ENCODE measurements at regions of chr9 and their contacts with region 1.

Region 1: DNA sequence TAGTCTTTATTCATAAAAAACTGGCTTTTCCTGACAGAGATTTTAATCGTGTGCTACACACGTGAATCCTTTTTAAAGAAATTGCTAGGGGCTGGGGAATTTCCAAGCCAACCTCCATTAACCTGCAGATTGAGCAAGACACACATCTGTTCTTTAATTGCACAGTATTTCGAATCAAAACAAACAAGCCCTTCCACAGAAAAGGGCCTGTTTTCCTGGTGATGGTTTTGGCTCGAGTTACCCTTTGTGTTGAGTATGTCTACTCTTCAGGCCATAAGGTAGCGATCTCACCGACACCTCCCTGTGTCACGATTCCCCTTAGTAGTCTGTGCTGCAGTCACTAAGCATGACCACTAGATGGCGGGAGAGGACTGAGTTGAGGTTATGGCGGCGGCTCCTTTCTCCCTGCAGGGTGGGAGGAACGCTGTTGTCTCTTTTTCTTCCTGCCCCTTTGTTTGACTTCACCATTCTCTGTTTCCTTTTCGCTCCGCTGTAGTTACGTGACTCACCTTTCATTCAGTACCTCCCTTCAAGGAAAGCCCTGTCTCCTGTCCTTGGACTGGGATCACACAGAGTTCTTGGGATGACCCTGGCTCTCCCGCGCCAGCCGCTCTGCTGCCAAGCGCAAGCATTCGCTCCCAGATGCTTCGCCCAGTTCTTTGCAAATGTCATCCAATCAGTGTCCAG is 137.1 kb upstream of the SLC24A2 start:
- DNase-seq: peak; percentile 56
- ATAC-seq: peak; percentile 95
- H3K4me3 ChIP-seq: peak overlapping the region; percentile 36 to 40
- H3K27ac ChIP-seq: no peak overlapping the region
- H3K4me1 ChIP-seq: peaks cover 0 to 4% of the 10 kb centered on the region in 2 experiments; a peak in 1 of 4 replicates
- H3K27me3 ChIP-seq: peaks cover 17% of the 10 kb centered on the region
- CTCF ChIP-seq: peak; percentile 68 to 95 (median 95)
- POLR2A ChIP-seq: no peak
- RAD21 ChIP-seq: peak; percentile 93

Region 2: DNA sequence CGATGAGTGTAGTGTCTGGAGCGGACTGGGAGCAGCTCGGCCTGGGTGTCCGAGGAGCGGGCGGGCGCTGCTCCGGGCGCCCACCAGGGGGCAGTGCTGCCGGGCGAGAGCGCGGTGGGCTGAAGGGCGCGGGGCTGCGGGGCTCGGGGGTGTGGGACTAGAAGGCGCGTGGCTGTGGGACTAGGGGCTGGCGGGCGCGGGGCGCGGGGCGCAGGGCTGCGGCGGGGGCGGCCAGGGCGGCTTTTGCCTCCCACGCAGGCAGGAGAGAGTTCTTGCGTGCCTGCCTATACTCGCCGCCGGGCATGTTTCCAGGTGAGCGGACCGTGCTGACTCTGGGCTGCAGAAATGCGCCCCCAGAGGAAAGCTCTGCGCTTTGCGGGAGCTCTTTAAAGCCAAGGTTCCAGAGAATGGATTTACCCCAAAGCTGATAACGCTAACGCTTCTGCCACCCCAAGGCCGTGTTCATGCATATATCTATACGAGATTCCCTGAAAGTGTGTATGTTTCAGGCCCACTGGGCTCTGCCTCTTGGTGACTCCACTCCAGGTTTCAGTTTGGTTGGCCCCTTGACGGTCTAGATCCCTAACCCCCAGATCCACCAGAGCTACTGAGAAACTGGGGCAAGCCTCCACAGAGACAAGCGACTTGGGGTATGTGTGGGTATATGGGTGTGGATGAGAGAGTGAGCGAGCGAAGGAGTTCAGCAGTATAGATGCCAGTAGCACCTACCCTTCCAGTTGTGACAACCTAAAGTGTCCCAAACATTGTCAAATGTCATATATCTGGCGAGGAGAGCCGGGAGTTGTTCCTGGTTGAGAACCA is 461.0 kb before region 1 on chr9:
- CTCF ChIA-PET with region 1: interaction called, 16 read pairs
- POLR2A ChIA-PET with region 1: no interaction called
- RAD21 ChIA-PET with region 1: interaction called in 1 of 2 experiments, 4 read pairs
- intact Hi-C with region 1: no loop called
- DNase-seq: peak; percentile 49
- ATAC-seq: peak; percentile 95
- H3K4me3 ChIP-seq: peak overlapping the region; percentile 2 to 49; a peak in 3 of 4 replicates
- H3K27ac ChIP-seq: no peak overlapping the region
- H3K4me1 ChIP-seq: peaks cover 0 to 3% of the 10 kb centered on the region in 2 experiments; a peak in 1 of 4 replicates
- H3K27me3 ChIP-seq: no peaks in the 10 kb centered on the region
- CTCF ChIP-seq: peak; percentile 35 to 79 (median 68); a peak in 5 of 6 replicates
- POLR2A ChIP-seq: no peak
- RAD21 ChIP-seq: no peak

Region 3: DNA sequence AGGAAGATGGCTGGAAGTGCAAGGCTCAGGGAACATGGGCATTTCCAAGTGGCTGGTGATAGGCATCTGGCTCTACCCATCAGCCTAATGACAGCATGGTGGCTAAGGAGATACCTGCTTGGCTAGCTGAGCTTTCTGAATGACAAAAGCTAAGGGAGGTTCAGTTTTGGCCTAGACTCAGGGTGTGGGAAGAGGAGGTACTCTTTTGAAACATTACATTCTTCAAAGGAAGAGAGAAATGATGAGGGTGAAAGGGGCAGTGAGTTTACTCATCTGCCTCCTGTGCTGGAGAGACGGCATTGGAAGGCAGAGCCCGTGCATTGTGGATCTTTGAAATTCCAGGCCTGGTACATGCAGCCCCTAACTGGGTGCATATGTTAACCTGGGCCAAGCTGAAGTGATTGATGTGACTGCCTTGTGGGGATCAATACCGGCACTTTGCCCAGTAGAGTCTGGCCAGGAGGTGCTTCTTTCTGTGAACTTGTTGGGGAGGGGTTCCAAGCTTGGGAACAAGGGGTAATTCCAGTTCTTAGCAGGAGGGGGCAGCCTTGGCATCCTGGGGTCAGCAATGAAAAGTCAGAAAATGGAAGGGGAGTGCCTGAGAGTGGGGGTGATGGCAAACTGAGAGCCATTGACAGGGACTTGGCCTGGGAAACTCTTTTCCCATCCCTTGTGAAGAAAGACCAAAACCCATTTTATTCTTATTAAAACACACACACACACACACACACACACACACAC is 408.6 kb before region 1 on chr9:
- CTCF ChIA-PET with region 1: interaction called, 13 read pairs
- POLR2A ChIA-PET with region 1: no interaction called
- RAD21 ChIA-PET with region 1: no interaction called
- intact Hi-C with region 1: no loop called
- DNase-seq: no peak
- ATAC-seq: peak; percentile 70
- H3K4me3 ChIP-seq: no peak overlapping the region
- H3K27ac ChIP-seq: no peak overlapping the region
- H3K4me1 ChIP-seq: peaks cover 0 to 10% of the 10 kb centered on the region in 2 experiments; a peak in 2 of 4 replicates
- H3K27me3 ChIP-seq: peaks cover 7% of the 10 kb centered on the region
- CTCF ChIP-seq: peak; percentile 8 to 64 (median 63); a peak in 4 of 6 replicates
- POLR2A ChIP-seq: no peak
- RAD21 ChIP-seq: peak; percentile 42; the same call in 1 of the 2 replicates

Region 4: DNA sequence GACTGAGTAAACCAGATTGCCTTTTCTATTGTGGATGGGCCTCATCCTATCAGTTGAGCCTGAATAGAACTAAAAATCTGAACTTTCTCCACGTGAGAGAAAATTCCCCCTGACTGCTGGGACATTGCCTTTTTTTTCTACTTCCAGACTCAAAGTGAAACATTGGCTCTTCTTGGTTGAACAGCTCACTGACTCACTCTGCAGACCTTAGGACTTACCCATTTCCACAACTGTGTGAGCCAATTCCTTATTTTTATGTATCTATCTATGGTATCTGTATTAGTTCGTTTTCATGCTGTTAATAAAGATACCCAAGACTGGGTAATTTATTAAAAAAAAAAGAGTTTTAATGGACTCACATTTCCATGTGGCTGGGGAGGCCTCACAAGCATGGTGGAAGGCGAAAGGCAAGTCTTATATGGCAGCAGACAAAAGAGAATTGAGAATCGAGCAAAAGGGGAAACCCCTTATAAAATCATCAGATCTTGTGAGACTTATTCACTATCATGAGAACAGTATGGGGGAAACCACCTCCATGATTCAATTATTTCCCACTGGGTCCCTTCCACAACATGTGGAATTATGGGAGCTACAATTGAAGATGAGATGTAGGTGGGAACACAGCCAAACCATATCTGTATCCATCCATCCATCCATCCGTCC is 169.6 kb after region 1 on chr9:
- CTCF ChIA-PET with region 1: no interaction called
- POLR2A ChIA-PET with region 1: no interaction called
- RAD21 ChIA-PET with region 1: no interaction called
- intact Hi-C with region 1: no loop called
- DNase-seq: no peak
- ATAC-seq: no peak
- H3K4me3 ChIP-seq: no peak overlapping the region
- H3K27ac ChIP-seq: no peak overlapping the region
- H3K4me1 ChIP-seq: no peaks in the 10 kb centered on the region
- H3K27me3 ChIP-seq: peaks cover 12% of the 10 kb centered on the region; the same call in 1 of the 2 replicates
- CTCF ChIP-seq: no peak
- POLR2A ChIP-seq: no peak
- RAD21 ChIP-seq: no peak

Region 5: DNA sequence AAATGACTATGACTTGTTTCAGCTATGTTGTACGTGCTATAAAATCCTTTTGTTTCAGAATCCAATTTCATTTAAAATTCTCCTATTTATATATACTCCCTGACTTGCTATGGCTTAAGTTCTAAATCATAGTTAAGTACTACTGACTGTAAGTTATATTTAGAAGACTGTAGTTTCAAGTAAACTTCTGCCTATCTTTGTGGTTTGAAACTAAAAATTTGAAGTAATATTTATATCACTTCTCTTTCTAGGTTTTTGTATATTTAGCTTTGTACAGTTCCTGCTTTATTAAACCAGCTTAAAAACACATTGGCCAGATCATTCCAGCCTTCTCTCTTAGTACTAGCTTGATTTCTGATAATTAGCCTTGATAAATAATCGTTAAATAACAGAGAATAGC is 500.1 kb after region 1 on chr9:
- CTCF ChIA-PET with region 1: no interaction called
- POLR2A ChIA-PET with region 1: no interaction called
- RAD21 ChIA-PET with region 1: no interaction called
- intact Hi-C with region 1: loop called (anchors 5 kb)
- DNase-seq: no peak
- ATAC-seq: no peak
- H3K4me3 ChIP-seq: no peak overlapping the region
- H3K27ac ChIP-seq: no peak overlapping the region
- H3K4me1 ChIP-seq: no peaks in the 10 kb centered on the region
- H3K27me3 ChIP-seq: no peaks in the 10 kb centered on the region; the same call in 1 of the 2 replicates
- CTCF ChIP-seq: no peak
- POLR2A ChIP-seq: no peak
- RAD21 ChIP-seq: no peak

Region 6: DNA sequence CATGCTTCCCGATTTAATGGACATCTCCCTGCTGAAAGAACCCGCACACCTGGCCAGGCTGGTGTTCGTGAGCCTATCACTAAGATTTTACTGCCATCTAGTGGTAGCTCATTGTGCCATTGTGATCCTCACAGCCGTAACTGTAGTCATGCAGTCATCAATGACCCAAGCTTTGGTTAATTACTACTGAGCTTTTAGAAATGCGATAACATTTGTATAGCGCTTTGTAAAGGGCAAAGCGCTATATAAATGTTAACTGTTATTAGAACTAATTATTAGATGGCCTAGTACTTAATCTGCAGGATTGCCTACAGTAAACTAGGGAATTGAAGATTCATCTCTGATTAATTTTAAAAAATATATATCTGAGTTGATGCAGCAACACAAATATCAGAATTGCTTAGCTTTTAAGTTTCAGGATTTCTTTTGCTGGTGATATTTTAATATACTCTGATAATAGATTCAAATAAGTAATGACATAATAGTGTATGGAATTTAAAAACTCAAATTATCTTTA is 1015.3 kb after region 1 on chr9:
- CTCF ChIA-PET with region 1: interaction called, 3 read pairs
- POLR2A ChIA-PET with region 1: no interaction called
- RAD21 ChIA-PET with region 1: no interaction called
- intact Hi-C with region 1: loop called (anchors 5 kb)
- DNase-seq: peak; percentile 62
- ATAC-seq: peak; percentile 100
- H3K4me3 ChIP-seq: no peak overlapping the region
- H3K27ac ChIP-seq: no peak overlapping the region
- H3K4me1 ChIP-seq: no peaks in the 10 kb centered on the region
- H3K27me3 ChIP-seq: no peaks in the 10 kb centered on the region
- CTCF ChIP-seq: peak; percentile 72 to 89 (median 80)
- POLR2A ChIP-seq: no peak
- RAD21 ChIP-seq: peak; percentile 92